Activated T-helper 1 cell treated with anti-CD3 and anti-CD28 coated beads, Interleukin-12 subunit alpha, Interleukin-12 subunit beta, Interleukin-2, Interleukin-4 antibody, amounts not matched to agents 30 ng/mL and 10 ng/mL and 1 ng/mL, durations not matched to agents 14 hours and 24 hours and 36 hours (primary cell): ENCODE measurements at regions of chr6 and their contacts with region 1.

Region 1: GRCh38 chr6:52389626-52390360 is 27.8 kb downstream of the PAQR8 start:
- DNase-seq: peak; percentile 45
- H3K4me3 Mint-ChIP-seq: peak overlapping the region; percentile 66
- H3K27ac Mint-ChIP-seq: peak overlapping the region; percentile 88
- H3K4me1 Mint-ChIP-seq: peaks cover 62% of the 10 kb centered on the region
- H3K27me3 Mint-ChIP-seq: peaks cover 4% of the 10 kb centered on the region

Region 2: GRCh38 chr6:52304983-52305390 is 84.8 kb before region 1 on chr6:
- intact Hi-C with region 1: loop called (anchors 2 kb)
- DNase-seq: no peak
- H3K4me3 Mint-ChIP-seq: peak overlapping the region; percentile 10
- H3K27ac Mint-ChIP-seq: peak overlapping the region; percentile 45
- H3K4me1 Mint-ChIP-seq: peaks cover 50% of the 10 kb centered on the region
- H3K27me3 Mint-ChIP-seq: no peaks in the 10 kb centered on the region

Region 3: GRCh38 chr6:52377538-52378221 is 12.1 kb before region 1 on chr6:
- intact Hi-C with region 1: loop called (anchors 2 kb)
- DNase-seq: no peak
- H3K4me3 Mint-ChIP-seq: no peak overlapping the region
- H3K27ac Mint-ChIP-seq: no peak overlapping the region
- H3K4me1 Mint-ChIP-seq: peaks cover 38% of the 10 kb centered on the region
- H3K27me3 Mint-ChIP-seq: peaks cover 1% of the 10 kb centered on the region

Region 4: GRCh38 chr6:53005663-53006250 is 616.0 kb after region 1 on chr6:
- intact Hi-C with region 1: no loop called
- DNase-seq: no peak
- H3K4me3 Mint-ChIP-seq: no peak overlapping the region
- H3K27ac Mint-ChIP-seq: no peak overlapping the region
- H3K4me1 Mint-ChIP-seq: no peaks in the 10 kb centered on the region
- H3K27me3 Mint-ChIP-seq: no peaks in the 10 kb centered on the region